GM18951 (cell line): ENCODE measurements at regions of chr5 and their contacts with region 1.

Region 1: DNA sequence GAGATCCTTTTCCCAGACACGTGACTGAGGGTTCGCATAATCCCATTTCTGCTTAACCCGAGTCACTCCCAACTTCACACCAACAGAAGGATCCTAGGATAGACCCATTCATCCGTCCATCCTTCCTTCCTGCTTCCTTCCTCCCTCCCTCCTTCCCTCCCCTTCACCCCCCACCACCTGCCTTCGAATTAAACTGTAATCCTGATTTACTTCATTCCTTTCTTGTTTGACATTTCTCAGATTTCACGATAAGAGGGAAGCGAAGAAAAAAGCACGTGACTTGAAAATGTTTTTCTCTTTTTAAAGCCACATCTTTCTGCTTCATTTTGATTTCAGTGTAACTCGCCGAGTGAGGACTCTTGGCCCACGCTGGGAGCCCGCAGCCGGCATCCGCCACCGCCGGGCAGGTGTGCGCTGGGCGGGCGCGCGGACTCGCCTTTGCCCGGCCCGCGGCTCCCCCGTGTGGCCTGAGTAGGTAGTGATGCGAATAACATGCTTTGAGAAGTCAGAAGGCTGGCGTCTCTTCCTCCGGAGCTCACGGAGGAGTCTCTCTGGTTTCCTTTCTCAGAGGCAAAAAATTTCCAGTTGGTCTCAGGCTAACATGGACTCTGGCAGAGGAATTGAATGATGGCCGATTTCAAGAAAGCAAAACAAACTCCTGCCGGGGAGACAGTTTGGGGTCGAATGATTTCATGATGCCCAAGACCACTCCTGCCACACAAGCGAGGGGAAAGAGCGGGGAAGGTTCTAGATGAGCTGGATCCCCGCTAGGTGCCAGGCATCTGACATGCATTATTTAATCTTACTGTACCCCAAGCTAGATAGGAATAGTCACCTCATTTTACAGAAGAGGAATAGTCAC is 117.7 kb downstream of the SLC12A2 start:
- POLR2A ChIP-seq: no peak

Region 2: DNA sequence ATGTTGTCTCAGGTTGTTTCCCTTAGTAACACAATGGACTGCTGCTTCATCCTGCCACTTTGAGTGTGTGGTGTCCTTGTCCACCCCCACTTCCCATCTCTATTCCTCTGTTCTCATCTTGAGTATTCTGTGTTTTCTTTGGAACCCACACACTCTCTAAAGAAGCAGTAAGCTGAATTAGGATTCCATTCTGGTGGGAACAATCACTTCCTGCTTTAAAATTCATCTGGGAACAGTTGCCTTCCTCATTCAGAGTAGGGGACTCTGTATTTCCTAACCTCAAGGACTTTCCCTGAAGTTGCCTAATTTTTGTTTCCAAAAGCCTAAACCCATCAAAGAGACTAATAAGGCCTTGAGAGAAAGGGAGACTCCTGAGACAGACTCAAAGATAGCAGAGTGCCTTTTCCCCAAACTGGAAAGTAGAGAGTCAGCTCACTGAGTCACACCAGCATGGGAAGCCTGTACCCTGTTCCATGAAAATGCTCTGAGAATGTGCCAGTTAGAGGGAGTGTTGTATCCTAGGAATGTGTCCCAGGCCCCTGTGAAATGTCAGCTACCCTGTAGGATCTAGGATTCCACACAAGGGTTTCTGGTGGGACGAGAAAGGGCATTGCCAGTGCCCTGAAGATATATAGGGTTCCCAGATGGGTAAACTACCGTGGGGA is 434.5 kb before region 1 on chr5:
- in situ Hi-C with region 1: loop called (anchors 10 kb)
- POLR2A ChIP-seq: no peak

Region 3: GRCh38 chr5:128062172-128062746 is 139.0 kb before region 1 on chr5:
- in situ Hi-C with region 1: no loop called
- POLR2A ChIP-seq: no peak

Region 4: DNA sequence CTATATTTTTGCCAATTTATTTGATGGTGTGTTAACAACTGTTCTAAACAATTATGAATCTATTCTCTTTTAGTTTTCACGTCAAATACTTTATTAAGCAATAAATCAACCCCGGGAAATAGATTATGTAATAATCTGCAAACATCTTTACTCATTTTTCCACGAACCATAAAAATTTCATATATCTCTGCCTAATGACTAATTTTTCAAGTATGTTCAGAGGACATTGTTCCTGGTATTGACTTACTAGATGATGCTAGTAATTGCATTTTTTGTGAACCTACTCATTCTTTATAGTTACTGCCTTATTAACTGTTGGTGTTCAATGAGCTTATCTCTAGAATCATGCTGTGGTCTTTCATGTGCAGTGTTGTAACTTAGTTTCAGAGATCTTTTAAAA is 377.8 kb after region 1 on chr5:
- in situ Hi-C with region 1: no loop called
- POLR2A ChIP-seq: no peak

Region 5: GRCh38 chr5:128674825-128675446 is 473.6 kb after region 1 on chr5:
- in situ Hi-C with region 1: loop called (anchors 25 kb)
- POLR2A ChIP-seq: no peak